CD8-positive, alpha-beta T cell (primary cell): ENCODE measurements at regions of chr9 and their contacts with region 1.

Region 1: DNA sequence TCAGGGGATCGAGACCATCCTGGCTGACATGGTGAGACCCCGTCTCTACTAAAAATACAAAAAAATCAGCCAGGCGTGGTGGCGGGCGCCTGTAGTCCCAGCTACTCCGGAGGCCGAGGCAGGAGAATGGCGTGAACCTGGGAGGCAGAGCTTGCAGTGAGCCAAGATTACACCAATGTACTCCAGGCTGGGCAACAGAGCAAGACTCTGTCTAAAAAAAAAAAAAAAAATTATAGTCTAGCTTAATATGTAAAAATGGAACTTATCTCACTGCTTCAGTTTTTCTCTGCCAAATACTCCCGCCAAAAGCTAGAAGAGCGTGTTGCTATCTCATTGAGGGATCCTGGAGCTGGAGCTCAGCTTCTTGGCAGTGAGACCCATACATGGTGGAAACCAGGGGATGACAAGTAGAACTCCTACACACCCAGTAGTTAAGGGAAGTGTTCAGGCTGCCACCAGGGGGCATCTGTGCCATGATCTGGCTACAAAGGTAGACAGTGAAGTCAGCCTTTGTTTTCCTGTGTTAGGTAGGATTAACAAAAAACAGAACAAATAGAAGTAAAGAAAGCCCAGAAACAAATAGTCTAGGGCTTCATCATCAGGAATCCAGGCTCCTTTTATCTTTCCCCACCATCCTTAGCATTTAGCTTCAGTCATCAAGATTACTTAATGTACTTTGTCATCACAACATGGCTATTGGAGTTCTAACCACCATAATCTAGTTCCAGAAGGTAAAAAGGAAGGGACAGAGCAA is 33.6 kb upstream of the GLIPR2 start:
- DNase-seq: peak; percentile 72 to 93 (median 90)
- ATAC-seq: peak; percentile 100
- H3K4me3 ChIP-seq: no peak overlapping the region
- H3K4me3 Mint-ChIP-seq: no peak overlapping the region
- H3K27ac ChIP-seq: no peak overlapping the region
- H3K27ac Mint-ChIP-seq: no peak overlapping the region
- H3K4me1 ChIP-seq: no peaks in the 10 kb centered on the region
- H3K4me1 Mint-ChIP-seq: peaks cover 6% of the 10 kb centered on the region
- H3K27me3 ChIP-seq: no peaks in the 10 kb centered on the region
- H3K27me3 Mint-ChIP-seq: no peaks in the 10 kb centered on the region
- CTCF ChIP-seq: peak; percentile 80

Region 2: DNA sequence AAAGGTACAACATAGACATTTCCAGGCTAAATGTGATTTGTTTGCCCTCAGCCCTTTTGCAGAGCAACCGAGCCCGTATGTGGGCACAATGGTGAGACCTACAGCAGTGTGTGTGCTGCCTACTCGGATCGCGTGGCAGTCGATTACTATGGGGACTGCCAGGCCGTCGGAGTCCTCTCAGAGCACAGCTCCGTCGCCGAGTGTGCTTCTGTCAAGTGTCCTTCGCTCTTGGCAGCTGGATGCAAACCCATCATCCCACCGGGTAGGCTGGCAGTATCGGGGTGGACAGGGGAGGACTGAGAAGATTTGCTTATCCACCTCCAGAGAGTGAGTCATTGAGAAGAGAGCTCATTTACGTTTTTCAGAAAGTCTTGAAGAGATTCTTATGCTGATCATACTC is 15.8 kb after region 1 on chr9:
- CTCF ChIA-PET with region 1: interaction called, 83 read pairs
- POLR2A ChIA-PET with region 1: interaction called, 3 read pairs
- intact Hi-C with region 1: no loop called
- DNase-seq: no peak
- ATAC-seq: no peak
- H3K4me3 ChIP-seq: no peak overlapping the region
- H3K4me3 Mint-ChIP-seq: no peak overlapping the region
- H3K27ac ChIP-seq: no peak overlapping the region
- H3K27ac Mint-ChIP-seq: no peak overlapping the region
- H3K4me1 ChIP-seq: no peaks in the 10 kb centered on the region
- H3K4me1 Mint-ChIP-seq: no peaks in the 10 kb centered on the region
- H3K27me3 ChIP-seq: no peaks in the 10 kb centered on the region
- H3K27me3 Mint-ChIP-seq: no peaks in the 10 kb centered on the region
- CTCF ChIP-seq: no peak

Region 3: DNA sequence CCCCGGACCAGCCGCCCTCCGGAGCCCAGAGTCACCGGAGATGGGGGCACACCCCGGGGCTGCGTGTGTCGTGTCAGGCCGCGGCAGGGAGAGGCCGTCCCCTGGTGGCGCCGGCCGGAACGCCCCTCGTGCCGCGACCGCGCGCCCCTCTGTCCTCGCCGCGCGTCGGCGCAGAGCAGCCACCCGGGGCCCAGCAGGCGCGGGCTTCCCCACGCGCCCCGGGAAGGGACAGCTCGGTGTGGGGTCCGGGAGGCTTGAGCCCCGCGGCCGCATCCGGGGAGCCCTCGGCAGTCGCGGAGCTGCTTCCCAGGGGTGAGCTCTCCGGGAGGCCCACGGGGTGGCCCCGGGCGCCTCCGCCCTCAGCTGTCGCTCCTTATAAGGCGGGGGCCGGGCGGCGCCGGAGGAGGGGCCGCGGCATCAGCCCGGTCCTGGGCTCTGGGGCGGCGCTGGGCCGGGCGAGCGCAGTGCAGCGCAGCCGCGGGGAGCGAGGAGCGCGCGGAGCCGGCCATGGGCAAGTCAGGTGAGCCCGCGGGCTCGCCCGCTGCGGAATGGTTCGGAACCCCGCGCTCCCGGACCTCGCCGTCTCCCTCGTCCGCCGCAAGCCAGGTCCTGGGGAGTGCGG is 33.5 kb after region 1 on chr9 and contains the start of gene GLIPR2:
- CTCF ChIA-PET with region 1: interaction called, 44 read pairs
- POLR2A ChIA-PET with region 1: interaction called, 3 read pairs
- intact Hi-C with region 1: loop called (anchors 2 to 5 kb)
- DNase-seq: peak; percentile 52 to 89 (median 75)
- ATAC-seq: peak; percentile 96
- H3K4me3 ChIP-seq: peak within 1 kb of the TSS; percentile 79 to 82
- H3K4me3 Mint-ChIP-seq: peak within 1 kb of the TSS; percentile 92
- H3K27ac ChIP-seq: peak within 1 kb of the TSS; percentile 56 to 58
- H3K27ac Mint-ChIP-seq: peak within 1 kb of the TSS; percentile 86
- H3K4me1 ChIP-seq: peaks cover 47% of the 10 kb centered on the region
- H3K4me1 Mint-ChIP-seq: peaks cover 49% of the 10 kb centered on the region
- H3K27me3 ChIP-seq: no peaks in the 10 kb centered on the region
- H3K27me3 Mint-ChIP-seq: no peaks in the 10 kb centered on the region
- CTCF ChIP-seq: peak; percentile 26
- total RNA-seq, gene GLIPR2: 8.6 to 10.2 TPM

Region 4: DNA sequence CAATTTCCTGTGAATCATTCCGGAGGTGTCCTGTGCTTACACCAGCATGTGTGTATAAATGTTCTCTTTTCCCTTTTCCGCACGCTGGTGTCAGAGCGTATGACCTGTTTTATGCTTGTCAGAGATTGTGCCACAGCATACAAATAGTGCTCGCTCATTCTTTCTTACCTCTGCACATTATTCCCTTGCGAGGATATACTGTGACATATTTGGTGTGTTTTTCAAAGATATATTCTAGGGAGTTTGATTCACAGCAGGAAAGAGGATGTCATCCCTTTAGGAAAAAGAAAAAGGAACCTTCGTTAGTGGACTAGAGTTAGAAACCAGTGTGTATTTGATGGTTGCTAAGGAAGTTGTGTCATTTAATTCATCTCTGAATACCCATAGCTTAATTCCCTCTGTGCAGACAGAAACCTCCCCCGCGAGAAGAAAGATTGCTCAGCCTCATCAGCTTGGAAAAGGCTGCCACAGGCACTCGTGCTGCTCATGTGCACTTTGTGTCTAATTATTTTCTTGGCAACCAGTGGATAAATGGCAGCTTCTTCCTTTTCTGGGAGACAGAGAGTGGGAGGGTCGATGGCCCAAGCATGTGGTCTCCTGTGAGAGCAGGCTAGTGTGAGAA is 51.5 kb after region 1 on chr9:
- CTCF ChIA-PET with region 1: interaction called, 22 read pairs
- POLR2A ChIA-PET with region 1: no interaction called
- intact Hi-C with region 1: loop called in 1 of 2 experiments (anchors 1 kb)
- DNase-seq: no peak
- ATAC-seq: no peak
- H3K4me3 ChIP-seq: no peak overlapping the region
- H3K4me3 Mint-ChIP-seq: no peak overlapping the region
- H3K27ac ChIP-seq: no peak overlapping the region
- H3K27ac Mint-ChIP-seq: peak overlapping the region; percentile 16
- H3K4me1 ChIP-seq: peaks cover 44% of the 10 kb centered on the region
- H3K4me1 Mint-ChIP-seq: peaks cover 39% of the 10 kb centered on the region
- H3K27me3 ChIP-seq: no peaks in the 10 kb centered on the region
- H3K27me3 Mint-ChIP-seq: no peaks in the 10 kb centered on the region
- CTCF ChIP-seq: no peak

Region 5: DNA sequence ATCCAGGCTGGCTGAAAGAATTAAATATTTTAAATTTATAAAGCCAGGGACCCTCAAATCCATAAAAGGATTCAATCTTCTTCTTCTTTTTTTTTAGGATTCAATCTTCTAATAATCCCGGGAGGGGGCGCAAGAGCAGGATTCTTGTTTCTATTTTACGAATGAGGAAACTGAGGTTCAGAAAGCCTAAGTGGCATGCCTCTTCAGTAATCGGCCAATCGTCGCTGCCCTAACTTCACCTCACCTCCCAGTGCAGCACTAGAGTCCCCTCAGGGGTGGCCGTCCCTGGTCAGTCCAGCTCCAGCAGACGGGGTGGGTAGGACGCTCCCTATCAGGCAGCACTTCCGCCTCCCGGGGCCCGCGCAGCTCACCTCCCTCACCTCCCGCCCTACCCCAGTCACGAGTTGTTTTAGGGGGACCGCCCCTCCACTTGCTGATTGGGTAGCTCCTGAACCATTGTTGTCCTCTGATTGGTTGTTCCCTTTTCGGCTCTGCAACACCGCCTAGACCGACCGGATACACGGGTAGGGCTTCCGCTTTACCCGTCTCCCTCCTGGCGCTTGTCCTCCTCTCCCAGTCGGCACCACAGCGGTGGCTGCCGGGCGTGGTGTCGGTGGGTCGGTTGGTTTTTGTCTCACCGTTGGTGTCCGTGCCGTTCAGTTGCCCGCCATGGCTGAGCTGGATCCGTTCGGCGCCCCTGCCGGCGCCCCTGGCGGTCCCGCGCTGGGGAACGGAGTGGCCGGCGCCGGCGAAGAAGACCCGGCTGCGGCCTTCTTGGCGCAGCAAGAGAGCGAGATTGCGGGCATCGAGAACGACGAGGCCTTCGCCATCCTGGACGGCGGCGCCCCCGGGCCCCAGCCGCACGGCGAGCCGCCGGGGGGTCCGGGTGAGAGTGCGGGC is 87.7 kb after region 1 on chr9 and contains the start of gene CLTA:
- CTCF ChIA-PET with region 1: interaction called, 19 read pairs
- POLR2A ChIA-PET with region 1: interaction called, 3 read pairs
- intact Hi-C with region 1: loop called in 1 of 2 experiments (anchors 1 kb)
- DNase-seq: peak; percentile 84 to 99 (median 93)
- ATAC-seq: peak; percentile 97
- H3K4me3 ChIP-seq: peak within 1 kb of the TSS; percentile 63 to 95
- H3K4me3 Mint-ChIP-seq: peak within 1 kb of the TSS; percentile 94
- H3K27ac ChIP-seq: peak within 1 kb of the TSS; percentile 74 to 80
- H3K27ac Mint-ChIP-seq: peak within 1 kb of the TSS; percentile 91
- H3K4me1 ChIP-seq: peaks cover 37% of the 10 kb centered on the region
- H3K4me1 Mint-ChIP-seq: peaks cover 50% of the 10 kb centered on the region
- H3K27me3 ChIP-seq: no peaks in the 10 kb centered on the region
- H3K27me3 Mint-ChIP-seq: no peaks in the 10 kb centered on the region
- CTCF ChIP-seq: peak; percentile 55
- total RNA-seq, gene CLTA: 39.1 to 39.6 TPM